Posterior cingulate gyrus (tissue), 11 donors: ENCODE measurements at regions of chr4 and their contacts with region 1.

Region 1: GRCh38 chr4:83034630-83035494 is at the start of gene COPS4:
- DNase-seq: peak; percentile 93 to 100 (median 96)

Region 2: DNA sequence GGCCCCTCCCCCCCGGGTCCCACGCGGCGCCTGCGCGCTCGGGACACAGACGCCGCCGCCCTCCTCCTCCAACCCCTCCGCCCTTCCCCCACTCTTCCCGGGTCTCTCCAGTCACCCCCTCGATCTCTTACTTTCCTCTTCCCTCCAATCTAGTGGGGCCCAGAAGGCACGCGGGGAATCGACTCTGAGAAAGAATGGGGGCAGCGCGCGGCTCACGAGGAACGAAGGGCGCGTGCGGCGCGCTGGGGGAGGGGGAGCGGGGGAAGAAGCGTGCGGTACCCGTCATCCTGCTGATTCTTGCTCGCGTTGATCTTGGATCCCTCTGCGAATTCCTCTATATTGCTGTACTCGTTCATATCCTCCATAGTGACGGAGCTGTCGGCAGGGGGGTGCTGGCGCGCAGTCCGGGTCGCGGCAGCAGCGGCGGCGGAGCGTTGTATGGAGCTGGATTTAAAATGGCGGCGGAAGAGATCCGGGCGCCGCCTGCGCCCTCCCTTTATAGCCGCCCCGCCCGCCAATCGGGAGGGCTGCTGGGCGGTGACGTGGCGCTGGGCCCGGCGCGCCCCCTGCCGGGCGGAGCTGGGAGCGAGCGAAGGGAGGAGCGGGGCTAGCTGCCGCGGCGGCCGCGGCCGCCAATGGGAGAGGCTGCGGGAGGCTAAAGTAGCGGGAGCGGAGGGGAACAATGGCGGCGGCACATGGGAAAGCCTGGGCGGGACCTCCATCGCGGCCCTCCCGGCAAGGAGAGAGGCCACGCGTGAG is 605.7 kb before region 1 on chr4:
- intact Hi-C with region 1: loop called (anchors 10 kb)
- DNase-seq: peak; percentile 84 to 99 (median 90)

Region 3: GRCh38 chr4:82890901-82891706 is 143.8 kb before region 1 on chr4 and contains the start of gene SEC31A:
- intact Hi-C with region 1: loop called (anchors 1 kb)
- DNase-seq: peak; percentile 91 to 99 (median 94)

Region 4: GRCh38 chr4:82900331-82901128 is 134.3 kb before region 1 on chr4 and contains the start of gene THAP9:
- intact Hi-C with region 1: loop called (anchors 2 kb)
- DNase-seq: peak; percentile 97 to 100 (median 99)

Region 5: GRCh38 chr4:83484500-83485461 is 449.9 kb after region 1 on chr4 and contains the start of gene ABRAXAS1:
- intact Hi-C with region 1: loop called (anchors 10 kb)
- DNase-seq: peak; percentile 85 to 99 (median 92)